ENCODE measurements at regions of chr16 and their contacts with region 1.

Region 1: GRCh38 chr16:337975-338575 is 14.4 kb downstream of the AXIN1 start:
- DNase-seq: no peak
- ATAC-seq: no peak
- H3K4me3 Mint-ChIP-seq: no peak overlapping the region
- H3K27ac Mint-ChIP-seq: no peak overlapping the region
- H3K4me1 Mint-ChIP-seq: peaks cover 11% of the 10 kb centered on the region
- H3K27me3 Mint-ChIP-seq: no peaks in the 10 kb centered on the region
- CTCF ChIP-seq: no peak

Region 2: GRCh38 chr16:324451-325334 is 13.4 kb before region 1 on chr16:
- CTCF ChIA-PET with region 1: interaction called, 10 read pairs
- POLR2A ChIA-PET with region 1: interaction called, 3 read pairs
- DNase-seq: peak; percentile 49
- ATAC-seq: peak; percentile 57
- H3K4me3 Mint-ChIP-seq: no peak overlapping the region
- H3K27ac Mint-ChIP-seq: peak overlapping the region; percentile 30; the same call in 1 of the 2 replicates
- H3K4me1 Mint-ChIP-seq: peaks cover 16% of the 10 kb centered on the region
- H3K27me3 Mint-ChIP-seq: no peaks in the 10 kb centered on the region
- CTCF ChIP-seq: no peak

Region 3: GRCh38 chr16:391885-392335 is 53.8 kb after region 1 on chr16:
- CTCF ChIA-PET with region 1: no interaction called
- POLR2A ChIA-PET with region 1: no interaction called
- DNase-seq: peak; percentile 88
- ATAC-seq: peak; percentile 85
- H3K4me3 Mint-ChIP-seq: no peak overlapping the region
- H3K27ac Mint-ChIP-seq: no peak overlapping the region
- H3K4me1 Mint-ChIP-seq: peaks cover 27% of the 10 kb centered on the region
- H3K27me3 Mint-ChIP-seq: peaks cover 3% of the 10 kb centered on the region; the same call in 1 of the 2 replicates
- CTCF ChIP-seq: peak; percentile 97

Region 4: GRCh38 chr16:450385-451134 is 112.5 kb after region 1 on chr16:
- CTCF ChIA-PET with region 1: no interaction called
- POLR2A ChIA-PET with region 1: no interaction called
- DNase-seq: no peak
- ATAC-seq: no peak
- H3K4me3 Mint-ChIP-seq: no peak overlapping the region
- H3K27ac Mint-ChIP-seq: peak overlapping the region; percentile 9; the same call in 1 of the 2 replicates
- H3K4me1 Mint-ChIP-seq: peaks cover 3% of the 10 kb centered on the region
- H3K27me3 Mint-ChIP-seq: no peaks in the 10 kb centered on the region
- CTCF ChIP-seq: no peak

Measured in WTC11 (cell line).